ENCODE measurements at regions of chr3 and their contacts with region 1.

Region 1: GRCh38 chr3:22862111-22862510 is 341.0 kb upstream of the UBE2E2 start:
- DNase-seq: peak in 1 of 2 experiments; percentile 5
- H3K4me3 ChIP-seq: no peak overlapping the region
- H3K4me3 Mint-ChIP-seq: no peak overlapping the region
- H3K27ac Mint-ChIP-seq: no peak overlapping the region
- H3K4me1 ChIP-seq: no peaks in the 10 kb centered on the region
- H3K4me1 Mint-ChIP-seq: no peaks in the 10 kb centered on the region
- H3K27me3 ChIP-seq: no peaks in the 10 kb centered on the region
- H3K27me3 Mint-ChIP-seq: no peaks in the 10 kb centered on the region
- CTCF ChIP-seq: peak in 1 of 2 experiments; percentile 35

Region 2: DNA sequence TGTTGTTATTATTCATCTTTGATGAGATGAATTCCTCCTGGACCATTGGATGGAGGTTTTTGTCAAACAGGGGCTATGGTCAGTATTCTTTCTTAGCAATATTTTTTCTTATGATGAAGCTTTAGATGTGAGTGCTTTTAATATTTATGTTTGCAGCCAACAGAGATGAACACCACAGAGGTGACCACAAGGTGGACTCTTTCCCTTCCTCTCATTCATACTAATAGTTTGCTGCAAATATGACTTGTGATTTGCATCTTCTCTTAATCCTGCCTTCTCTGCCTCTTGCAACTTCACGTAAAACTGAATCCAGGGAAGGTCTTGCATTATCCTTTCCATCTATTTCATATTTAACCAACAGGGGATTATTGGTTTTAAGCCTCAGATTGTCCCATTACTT is 132.1 kb before region 1 on chr3:
- CTCF ChIA-PET with region 1: no interaction called
- POLR2A ChIA-PET with region 1: no interaction called
- intact Hi-C with region 1: loop called (anchors 1 kb)
- DNase-seq: peak in 1 of 2 experiments; percentile 11
- H3K4me3 ChIP-seq: no peak overlapping the region
- H3K4me3 Mint-ChIP-seq: no peak overlapping the region
- H3K27ac Mint-ChIP-seq: no peak overlapping the region
- H3K4me1 ChIP-seq: peaks cover 19% of the 10 kb centered on the region; the same call in 1 of the 2 replicates
- H3K4me1 Mint-ChIP-seq: peaks cover 7% of the 10 kb centered on the region
- H3K27me3 ChIP-seq: no peaks in the 10 kb centered on the region; the same call in 1 of the 2 replicates
- H3K27me3 Mint-ChIP-seq: peaks cover 2% of the 10 kb centered on the region
- CTCF ChIP-seq: peak; percentile 40 to 47

Measured in Caco-2 (cell line).